HEK293 (cell line): ENCODE measurements at regions of chr1 and their contacts with region 1.

Region 1: GRCh38 chr1:66924756-66925557 is at the starts of genes DNAI4 and MIER1:
- H3K4me3 ChIP-seq: peak within 1 kb of the TSS; percentile 99
- H3K27ac ChIP-seq: peak within 1 kb of the TSS; percentile 69
- H3K4me1 ChIP-seq: peaks cover 4% of the 10 kb centered on the region; the same call in 1 of the 2 replicates
- CTCF ChIP-seq: peak; percentile 53; the same call in 1 of the 2 replicates

Region 2: GRCh38 chr1:67053785-67054772 is 129.1 kb after region 1 on chr1 and contains the start of gene SLC35D1:
- CTCF ChIA-PET with region 1: no interaction called
- POLR2A ChIA-PET with region 1: interaction called, 10 read pairs
- H3K4me3 ChIP-seq: peak within 1 kb of the TSS; percentile 84
- H3K27ac ChIP-seq: peak within 1 kb of the TSS; percentile 92
- H3K4me1 ChIP-seq: no peaks in the 10 kb centered on the region
- CTCF ChIP-seq: peak; percentile 59